Sigmoid colon (tissue), 7 donors: ENCODE measurements at regions of chr11 and their contacts with region 1.

Region 1: GRCh38 chr11:19679952-19680828 is 32.4 kb upstream of the NAV2 start:
- DNase-seq: peak; percentile 96
- H3K4me3 ChIP-seq: peak overlapping the region in 1 of 4 donors; percentile 5
- H3K27ac ChIP-seq: peak overlapping the region; percentile 85 to 93 (median 88)
- H3K4me1 ChIP-seq: peaks cover 0 to 96% (median 86%) of the 10 kb centered on the region in 4 donors
- H3K27me3 ChIP-seq: no peaks in the 10 kb centered on the region
- CTCF ChIP-seq: no peak
- EP300 ChIP-seq: peak in 3 of 4 donors; percentile 4 to 94 (median 85)
- POLR2A ChIP-seq: no peak

Region 2: DNA sequence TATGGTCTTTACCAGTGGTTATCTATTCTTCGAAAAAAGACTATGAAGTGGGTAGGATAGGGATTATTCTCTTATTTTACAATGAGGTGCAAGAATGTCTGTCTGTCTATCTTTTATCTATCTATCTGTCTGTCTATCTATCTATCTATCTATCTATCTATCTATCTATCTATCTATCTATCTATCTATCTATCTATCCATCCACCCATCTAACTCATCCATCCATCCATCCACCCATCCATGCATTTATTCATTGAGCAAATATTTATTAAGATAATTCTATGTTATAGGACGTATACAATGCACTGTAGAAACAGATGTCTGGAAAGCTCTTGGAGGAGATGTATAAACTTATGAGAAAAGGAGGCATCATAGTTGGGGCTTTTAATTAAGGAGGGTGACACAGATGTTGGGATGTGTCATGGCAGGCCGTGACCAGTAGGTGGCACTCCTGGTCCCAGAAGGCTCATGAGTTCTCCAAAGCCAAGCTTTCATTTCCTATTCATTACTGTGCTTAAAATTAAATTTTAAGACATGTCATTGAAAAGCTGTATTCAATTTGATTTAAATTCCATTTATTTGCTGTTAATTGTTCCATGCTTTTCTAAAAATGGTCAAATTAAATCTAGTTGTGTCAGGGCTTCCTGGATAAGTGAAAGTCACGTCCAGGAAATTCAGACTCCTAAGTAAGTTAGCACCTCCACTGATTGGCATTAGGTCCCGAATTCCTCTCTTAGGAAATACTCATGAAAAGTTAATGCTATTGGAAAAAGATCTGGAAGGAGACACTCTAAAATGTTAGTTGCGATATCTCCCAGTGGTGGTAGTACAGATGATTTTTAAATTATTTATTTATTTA is 420.5 kb before region 1 on chr11:
- intact Hi-C with region 1: no loop called
- DNase-seq: no peak
- H3K4me3 ChIP-seq: peak overlapping the region in 1 of 4 donors; percentile 8
- H3K27ac ChIP-seq: no peak overlapping the region
- H3K4me1 ChIP-seq: no peaks in the 10 kb centered on the region
- H3K27me3 ChIP-seq: no peaks in the 10 kb centered on the region
- CTCF ChIP-seq: peak in 3 of 4 experiments; percentile 74 to 93 (median 77)
- EP300 ChIP-seq: no peak
- POLR2A ChIP-seq: no peak

Region 3: GRCh38 chr11:19628018-19628417 is 52.2 kb before region 1 on chr11:
- intact Hi-C with region 1: loop called (anchors 10 kb)
- DNase-seq: peak; percentile 97
- H3K4me3 ChIP-seq: no peak overlapping the region
- H3K27ac ChIP-seq: peak overlapping the region; percentile 22 to 78 (median 77)
- H3K4me1 ChIP-seq: peaks cover 0 to 36% (median 24%) of the 10 kb centered on the region in 4 donors
- H3K27me3 ChIP-seq: no peaks in the 10 kb centered on the region
- CTCF ChIP-seq: peak in 1 of 4 experiments; percentile 40
- EP300 ChIP-seq: peak; percentile 72 to 98 (median 91)
- POLR2A ChIP-seq: no peak

Region 4: DNA sequence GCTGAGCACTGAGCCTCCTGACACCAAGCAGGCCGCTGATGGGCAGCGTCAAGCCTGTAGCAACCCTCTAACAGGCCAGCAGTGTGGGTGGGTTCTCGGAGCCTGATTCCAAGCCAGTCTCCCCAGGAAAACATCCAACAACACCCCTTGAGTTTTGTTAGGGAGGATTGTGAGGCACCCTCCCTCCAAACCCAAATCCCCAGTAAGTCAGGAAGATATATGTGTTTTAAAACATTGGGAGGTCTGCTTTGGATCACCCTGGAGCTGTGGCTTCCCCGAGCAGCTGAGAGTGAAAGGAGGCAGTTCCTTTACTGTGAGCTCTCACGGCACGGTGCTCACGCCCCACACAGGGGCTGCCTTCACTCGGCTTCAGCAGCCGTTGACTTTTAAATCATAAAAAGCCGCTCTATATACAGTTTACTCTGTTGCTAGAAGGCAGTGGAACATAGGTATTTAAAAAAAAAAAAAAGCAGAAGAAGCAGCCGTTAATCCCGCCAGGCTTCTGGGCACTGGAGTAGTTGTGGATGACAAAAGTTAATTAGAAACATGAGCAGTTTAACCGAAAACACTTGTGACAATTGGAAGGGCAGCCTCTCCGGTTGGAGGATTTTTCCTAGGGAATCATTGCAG is 251.1 kb after region 1 on chr11:
- intact Hi-C with region 1: no loop called
- DNase-seq: peak; percentile 91
- H3K4me3 ChIP-seq: peak overlapping the region in 1 of 4 donors; percentile 14
- H3K27ac ChIP-seq: peak overlapping the region; percentile 44 to 82 (median 74)
- H3K4me1 ChIP-seq: peaks cover 0 to 94% (median 88%) of the 10 kb centered on the region in 4 donors
- H3K27me3 ChIP-seq: no peaks in the 10 kb centered on the region
- CTCF ChIP-seq: no peak
- EP300 ChIP-seq: peak in 3 of 4 donors; percentile 42 to 76 (median 61)
- POLR2A ChIP-seq: no peak